ENCODE measurements at regions of chr12 and their contacts with region 1.

Region 1: GRCh38 chr12:121626087-121626852 is at the start of gene ORAI1:
- DNase-seq: peak; percentile 99
- ATAC-seq: peak; percentile 95
- total RNA-seq, gene ORAI1: 9.6 TPM

Region 2: DNA sequence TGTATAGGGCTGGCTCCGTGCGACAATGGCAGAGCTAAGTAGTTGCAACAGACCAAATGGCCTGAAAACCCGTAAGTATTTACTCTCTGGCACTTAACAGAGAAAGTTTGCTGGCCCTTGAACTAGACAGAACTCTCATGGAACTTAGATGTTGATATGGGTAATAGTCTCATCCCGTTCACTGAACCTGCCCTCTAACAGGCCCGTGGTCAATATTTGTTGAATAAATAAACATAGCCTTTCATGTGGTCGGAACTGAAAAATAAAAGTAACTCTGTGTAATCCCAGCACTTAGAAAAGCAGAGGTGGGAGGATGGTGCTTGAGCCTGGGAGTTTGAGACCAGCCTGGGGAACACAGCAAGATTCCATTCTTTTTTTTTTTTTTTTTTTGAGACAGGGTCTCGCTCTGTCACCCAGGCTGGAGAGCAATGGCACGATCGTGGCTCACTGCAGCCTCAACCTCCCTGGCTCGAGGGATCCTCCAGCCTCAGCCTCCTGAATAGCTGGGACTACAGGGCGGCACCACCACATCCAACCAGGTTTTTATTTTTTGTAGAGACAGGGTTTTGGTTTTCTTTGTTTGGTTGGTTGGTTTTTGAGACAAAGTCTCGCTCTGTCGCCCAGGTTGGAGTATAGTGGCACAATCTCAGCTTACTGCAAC is 75.2 kb before region 1 on chr12:
- intact Hi-C with region 1: loop called (anchors 5 kb)
- DNase-seq: peak; percentile 17
- ATAC-seq: no peak